Activated CD4-positive, alpha-beta memory T cell treated with anti-CD3 and anti-CD28 coated beads for 36 hours (primary cell): ENCODE measurements at regions of chr20 and their contacts with region 1.

Region 1: GRCh38 chr20:31851240-31851955 is 6.0 kb upstream of the FOXS1 start:
- DNase-seq: no peak
- H3K4me3 Mint-ChIP-seq: no peak overlapping the region
- H3K27ac Mint-ChIP-seq: no peak overlapping the region
- H3K4me1 Mint-ChIP-seq: no peaks in the 10 kb centered on the region
- H3K27me3 Mint-ChIP-seq: peaks cover 10% of the 10 kb centered on the region

Region 2: GRCh38 chr20:31835977-31836852 is 15.2 kb before region 1 on chr20:
- CTCF ChIA-PET with region 1: interaction called, 13 read pairs
- POLR2A ChIA-PET with region 1: no interaction called
- intact Hi-C with region 1: no loop called
- DNase-seq: peak; percentile 51
- H3K4me3 Mint-ChIP-seq: no peak overlapping the region
- H3K27ac Mint-ChIP-seq: no peak overlapping the region
- H3K4me1 Mint-ChIP-seq: peaks cover 7% of the 10 kb centered on the region
- H3K27me3 Mint-ChIP-seq: no peaks in the 10 kb centered on the region

Region 3: DNA sequence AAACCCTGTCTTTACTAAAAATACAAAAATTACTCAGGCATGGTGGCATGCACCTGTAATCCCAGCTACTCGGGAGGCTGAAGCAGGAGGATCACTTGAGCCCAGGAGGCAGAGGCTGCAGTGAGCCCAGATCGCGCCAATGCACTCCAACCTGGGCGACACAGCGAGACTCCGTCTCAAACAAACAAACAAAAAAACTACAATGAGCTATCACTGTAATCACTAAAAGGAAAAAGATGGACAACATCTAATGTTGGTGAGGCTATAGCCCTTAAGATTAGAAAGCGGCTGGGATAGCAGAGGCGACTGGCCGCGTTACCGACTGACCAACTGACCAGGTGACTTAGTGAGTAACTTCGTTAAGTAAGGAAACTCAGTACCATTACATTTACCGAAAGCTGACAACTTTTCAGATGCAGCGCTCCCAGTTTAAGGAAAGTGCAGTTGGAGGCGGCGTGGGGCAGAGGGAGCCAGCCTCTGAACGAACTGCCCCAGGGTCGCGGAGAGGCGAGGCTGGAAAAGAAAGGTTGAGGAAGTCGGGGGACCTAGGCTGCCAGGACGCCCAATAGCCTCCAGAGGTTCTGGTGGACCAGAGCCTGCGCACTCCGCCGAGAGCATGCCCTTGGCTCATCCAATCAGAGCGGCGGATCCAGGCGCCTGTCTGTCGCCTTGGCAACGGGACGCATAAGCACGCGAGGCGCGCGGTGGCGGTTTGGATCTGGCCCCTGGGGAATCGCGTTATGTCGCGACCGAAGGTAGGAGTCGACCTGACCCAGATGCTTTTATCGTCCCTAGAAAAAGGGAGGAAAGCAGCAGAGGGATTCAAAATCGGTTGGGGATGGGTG is 28.0 kb after region 1 on chr20:
- CTCF ChIA-PET with region 1: interaction called, 12 read pairs
- POLR2A ChIA-PET with region 1: no interaction called
- intact Hi-C with region 1: no loop called
- DNase-seq: peak; percentile 86
- H3K4me3 Mint-ChIP-seq: peak overlapping the region; percentile 92
- H3K27ac Mint-ChIP-seq: no peak overlapping the region
- H3K4me1 Mint-ChIP-seq: peaks cover 9% of the 10 kb centered on the region
- H3K27me3 Mint-ChIP-seq: no peaks in the 10 kb centered on the region

Region 4: DNA sequence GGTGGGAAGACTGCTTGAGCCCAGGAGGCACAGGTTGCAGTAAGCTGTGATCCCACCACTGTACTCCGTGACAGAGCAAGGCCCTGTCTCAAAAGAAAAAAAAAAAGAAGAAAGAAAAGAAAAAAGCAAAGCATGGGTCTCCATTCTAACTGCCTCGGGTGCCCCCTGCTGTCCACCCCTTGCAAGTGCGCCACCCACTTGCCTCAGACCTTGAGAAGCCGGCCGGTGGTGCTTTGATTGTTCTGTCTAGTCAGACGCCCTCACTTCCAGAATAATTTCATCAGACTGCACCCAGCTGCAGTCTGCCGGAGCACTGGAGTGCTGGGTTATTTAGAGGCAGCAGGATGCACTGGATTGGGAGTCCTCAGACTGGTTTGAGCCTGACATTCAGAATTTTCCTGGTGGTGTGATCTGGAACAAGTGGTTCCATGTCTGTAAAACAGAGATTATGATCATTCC is 240.5 kb after region 1 on chr20:
- CTCF ChIA-PET with region 1: interaction called, 24 read pairs
- POLR2A ChIA-PET with region 1: no interaction called
- intact Hi-C with region 1: loop called (anchors 2 kb)
- DNase-seq: peak; percentile 86
- H3K4me3 Mint-ChIP-seq: no peak overlapping the region
- H3K27ac Mint-ChIP-seq: no peak overlapping the region
- H3K4me1 Mint-ChIP-seq: peaks cover 2% of the 10 kb centered on the region
- H3K27me3 Mint-ChIP-seq: peaks cover 3% of the 10 kb centered on the region

Region 5: GRCh38 chr20:33753763-33754162 is 1902.4 kb after region 1 on chr20:
- CTCF ChIA-PET with region 1: no interaction called
- POLR2A ChIA-PET with region 1: no interaction called
- intact Hi-C with region 1: no loop called
- DNase-seq: no peak
- H3K4me3 Mint-ChIP-seq: no peak overlapping the region
- H3K27ac Mint-ChIP-seq: no peak overlapping the region
- H3K4me1 Mint-ChIP-seq: no peaks in the 10 kb centered on the region
- H3K27me3 Mint-ChIP-seq: no peaks in the 10 kb centered on the region